CD4-positive, alpha-beta memory T cell (primary cell): ENCODE measurements at regions of chr12 and their contacts with region 1.

Region 1: GRCh38 chr12:8890313-8891085 is 23.8 kb upstream of the PHC1 start:
- DNase-seq: peak; percentile 52 to 68 (median 62)
- H3K4me3 ChIP-seq: peak overlapping the region; percentile 44 to 49
- H3K4me3 Mint-ChIP-seq: peak overlapping the region; percentile 88 to 96 (median 94)
- H3K27ac ChIP-seq: peak overlapping the region; percentile 29
- H3K27ac Mint-ChIP-seq: peak overlapping the region in 6 of 7 donors; percentile 81 to 93 (median 84)
- H3K4me1 ChIP-seq: no peaks in the 10 kb centered on the region
- H3K4me1 Mint-ChIP-seq: peaks cover 0 to 6% (median 5%) of the 10 kb centered on the region in 4 donors
- H3K27me3 ChIP-seq: no peaks in the 10 kb centered on the region
- H3K27me3 Mint-ChIP-seq: no peaks in the 10 kb centered on the region

Region 2: GRCh38 chr12:8662593-8662992 is 227.9 kb before region 1 on chr12 and contains the start of gene MFAP5:
- CTCF ChIA-PET with region 1: interaction called, 41 read pairs
- POLR2A ChIA-PET with region 1: interaction called, 6 read pairs
- intact Hi-C with region 1: loop called (anchors 1 kb)
- DNase-seq: no peak
- H3K4me3 ChIP-seq: no peak within 1 kb of the TSS
- H3K4me3 Mint-ChIP-seq: no peak within 1 kb of the TSS
- H3K27ac ChIP-seq: no peak within 1 kb of the TSS
- H3K27ac Mint-ChIP-seq: no peak within 1 kb of the TSS
- H3K4me1 ChIP-seq: no peaks in the 10 kb centered on the region
- H3K4me1 Mint-ChIP-seq: no peaks in the 10 kb centered on the region
- H3K27me3 ChIP-seq: no peaks in the 10 kb centered on the region
- H3K27me3 Mint-ChIP-seq: peaks cover 5% of the 10 kb centered on the region in 2 donors
- total RNA-seq, gene MFAP5: not detected

Region 3: DNA sequence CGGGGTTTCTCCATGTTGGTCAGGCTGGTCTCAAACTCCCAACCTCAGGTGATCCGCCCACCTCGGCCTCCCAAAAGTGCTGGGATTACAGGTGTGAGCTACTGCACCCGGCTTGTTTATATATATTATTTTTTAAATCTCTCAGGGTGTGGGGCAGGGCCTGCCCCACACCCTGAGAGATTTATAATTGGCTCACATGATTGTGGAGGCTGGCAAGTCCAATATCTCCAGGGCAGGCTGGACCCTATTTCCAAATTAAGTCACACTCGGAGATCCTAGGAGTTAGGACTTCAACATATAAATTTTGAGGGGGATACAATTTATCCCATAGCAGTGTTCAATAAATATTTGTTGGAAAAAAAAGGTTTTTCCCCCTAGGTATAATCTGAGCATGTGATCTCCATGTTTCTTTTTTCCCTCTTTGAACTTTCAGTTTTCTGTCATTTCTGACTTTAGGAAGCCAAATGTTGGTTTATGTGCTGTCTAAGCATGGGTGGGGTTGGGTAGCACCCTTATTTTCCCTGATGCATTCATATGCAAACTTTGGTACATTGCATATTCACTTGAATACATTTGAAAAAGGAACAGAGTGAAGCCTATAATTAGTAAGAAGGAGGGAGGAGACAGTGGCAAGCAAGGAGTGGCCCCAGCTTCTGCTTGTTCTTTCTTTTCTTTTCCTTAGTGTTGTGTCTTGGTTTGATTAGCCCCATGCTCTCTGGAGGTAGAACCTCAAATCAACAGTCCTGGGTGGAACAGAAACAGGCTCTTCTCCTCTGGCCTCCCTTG is 76.7 kb before region 1 on chr12:
- CTCF ChIA-PET with region 1: no interaction called
- POLR2A ChIA-PET with region 1: no interaction called
- intact Hi-C with region 1: no loop called
- DNase-seq: no peak
- H3K4me3 ChIP-seq: no peak overlapping the region
- H3K4me3 Mint-ChIP-seq: no peak overlapping the region
- H3K27ac ChIP-seq: no peak overlapping the region
- H3K27ac Mint-ChIP-seq: peak overlapping the region in 1 of 7 donors; percentile 67
- H3K4me1 ChIP-seq: no peaks in the 10 kb centered on the region
- H3K4me1 Mint-ChIP-seq: peaks cover 0 to 2% (median 0%) of the 10 kb centered on the region in 4 donors
- H3K27me3 ChIP-seq: no peaks in the 10 kb centered on the region
- H3K27me3 Mint-ChIP-seq: no peaks in the 10 kb centered on the region

Region 4: GRCh38 chr12:8860165-8860961 is 30.1 kb before region 1 on chr12:
- CTCF ChIA-PET with region 1: interaction called, 13 read pairs
- POLR2A ChIA-PET with region 1: no interaction called
- intact Hi-C with region 1: no loop called
- DNase-seq: peak in 4 of 5 donors; percentile 18 to 28 (median 25)
- H3K4me3 ChIP-seq: no peak overlapping the region
- H3K4me3 Mint-ChIP-seq: no peak overlapping the region
- H3K27ac ChIP-seq: no peak overlapping the region
- H3K27ac Mint-ChIP-seq: no peak overlapping the region
- H3K4me1 ChIP-seq: no peaks in the 10 kb centered on the region
- H3K4me1 Mint-ChIP-seq: no peaks in the 10 kb centered on the region
- H3K27me3 ChIP-seq: no peaks in the 10 kb centered on the region
- H3K27me3 Mint-ChIP-seq: peaks cover 0 to 4% of the 10 kb centered on the region in 2 donors

Region 5: DNA sequence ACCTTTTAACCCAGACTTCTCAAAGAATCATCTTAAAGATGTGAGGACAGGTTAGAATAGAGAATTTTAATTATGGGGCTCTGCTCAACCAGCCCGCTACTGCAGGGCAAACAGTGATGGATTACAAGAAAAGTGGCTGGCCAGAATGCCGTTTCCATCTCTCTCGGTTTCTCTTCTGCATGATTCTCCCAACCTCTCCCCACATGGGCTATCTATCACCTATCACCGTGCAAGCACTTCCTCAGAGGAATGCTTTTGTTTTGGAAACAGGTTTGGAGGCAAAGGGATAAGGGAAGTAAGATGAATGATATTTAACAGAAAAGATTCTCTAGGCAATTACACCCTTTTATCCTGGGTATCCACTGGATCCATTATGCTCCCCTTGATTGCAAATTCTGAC is 13.6 kb before region 1 on chr12:
- CTCF ChIA-PET with region 1: interaction called, 22 read pairs
- POLR2A ChIA-PET with region 1: interaction called, 3 read pairs
- intact Hi-C with region 1: no loop called
- DNase-seq: no peak
- H3K4me3 ChIP-seq: no peak overlapping the region
- H3K4me3 Mint-ChIP-seq: no peak overlapping the region
- H3K27ac ChIP-seq: no peak overlapping the region
- H3K27ac Mint-ChIP-seq: no peak overlapping the region
- H3K4me1 ChIP-seq: no peaks in the 10 kb centered on the region
- H3K4me1 Mint-ChIP-seq: peaks cover 0 to 6% (median 2%) of the 10 kb centered on the region in 4 donors
- H3K27me3 ChIP-seq: no peaks in the 10 kb centered on the region
- H3K27me3 Mint-ChIP-seq: peaks cover 0 to 3% of the 10 kb centered on the region in 2 donors

Region 6: DNA sequence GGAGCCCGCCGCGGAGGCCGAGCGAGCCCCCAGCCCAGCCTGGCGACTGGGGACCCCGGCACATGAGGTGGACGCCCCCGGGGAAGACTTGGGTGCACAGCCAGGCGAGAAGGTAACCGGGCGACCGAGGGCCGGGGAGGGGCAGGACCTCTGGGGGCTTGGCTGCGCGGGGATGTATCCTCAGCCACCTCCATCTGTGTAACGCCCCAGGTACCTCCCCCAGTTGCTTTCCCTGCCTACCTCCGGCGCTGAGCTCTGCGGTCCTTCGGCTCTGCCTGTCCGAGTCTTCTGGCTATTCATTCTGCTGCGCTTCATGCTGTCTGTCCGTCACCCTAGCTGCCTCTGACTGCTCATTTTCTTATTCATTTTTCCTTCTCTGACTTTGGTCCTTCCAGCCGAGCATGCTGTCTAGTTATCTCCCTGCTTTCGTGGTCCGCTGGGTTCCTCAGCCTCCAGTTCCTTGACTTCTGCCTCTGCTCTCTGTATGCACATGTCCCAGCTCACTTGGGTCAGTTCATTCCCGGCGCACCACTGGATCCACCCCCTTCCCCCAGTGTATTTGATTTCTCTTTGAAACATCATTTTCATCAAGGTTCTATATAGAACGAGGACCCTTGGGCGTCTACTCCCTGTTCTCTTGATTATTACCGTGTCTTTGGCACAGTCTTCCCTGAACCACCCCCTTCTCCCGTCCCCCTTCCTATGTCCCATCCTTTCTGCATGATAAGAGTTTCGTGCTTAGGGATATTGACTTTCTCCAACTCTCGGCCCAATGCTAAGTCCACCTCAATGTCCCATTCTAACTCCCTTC is 24.4 kb after region 1 on chr12:
- CTCF ChIA-PET with region 1: interaction called, 38 read pairs
- POLR2A ChIA-PET with region 1: interaction called, 3 read pairs
- intact Hi-C with region 1: no loop called
- DNase-seq: peak; percentile 65 to 80 (median 70)
- H3K4me3 ChIP-seq: peak overlapping the region; percentile 81 to 92
- H3K4me3 Mint-ChIP-seq: no peak overlapping the region
- H3K27ac ChIP-seq: peak overlapping the region; percentile 63
- H3K27ac Mint-ChIP-seq: no peak overlapping the region
- H3K4me1 ChIP-seq: peaks cover 36% of the 10 kb centered on the region
- H3K4me1 Mint-ChIP-seq: peaks cover 10 to 17% (median 14%) of the 10 kb centered on the region in 4 donors
- H3K27me3 ChIP-seq: no peaks in the 10 kb centered on the region
- H3K27me3 Mint-ChIP-seq: no peaks in the 10 kb centered on the region

Region 7: DNA sequence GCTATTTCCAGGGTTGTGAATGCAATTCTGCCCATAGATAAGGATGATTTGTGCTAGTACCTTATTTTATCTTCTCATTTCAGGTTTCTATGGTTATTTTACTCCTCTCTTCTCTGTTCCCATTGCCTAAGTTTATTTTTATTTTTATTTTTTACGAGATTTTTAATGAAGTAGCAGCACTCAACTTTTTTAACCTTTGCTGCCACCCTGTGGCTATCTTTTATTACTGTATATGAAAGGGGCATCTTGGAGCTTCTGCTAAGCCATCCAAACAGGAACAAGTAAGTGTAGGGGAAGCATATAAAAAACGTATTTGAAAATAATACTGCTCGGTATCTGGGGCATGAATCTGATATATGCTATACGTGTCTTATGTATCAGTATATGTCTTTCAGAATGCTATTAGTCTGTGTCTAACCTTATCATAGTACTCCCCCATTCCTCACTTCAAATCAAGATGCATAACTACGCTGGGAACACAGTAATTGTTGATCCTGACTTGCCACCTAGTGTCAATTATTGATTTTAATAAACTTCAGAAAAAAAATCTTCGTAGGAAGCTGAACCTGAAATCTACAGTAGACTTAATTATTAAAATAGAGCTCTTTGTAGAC is 159.1 kb after region 1 on chr12:
- CTCF ChIA-PET with region 1: interaction called, 64 read pairs
- POLR2A ChIA-PET with region 1: interaction called, 3 read pairs
- intact Hi-C with region 1: loop called (anchors 1 kb)
- DNase-seq: peak; percentile 39 to 66 (median 60)
- H3K4me3 ChIP-seq: no peak overlapping the region
- H3K4me3 Mint-ChIP-seq: peak overlapping the region in 2 of 8 donors; percentile 26 to 55
- H3K27ac ChIP-seq: no peak overlapping the region
- H3K27ac Mint-ChIP-seq: peak overlapping the region; percentile 26 to 90 (median 51)
- H3K4me1 ChIP-seq: peaks cover 25% of the 10 kb centered on the region
- H3K4me1 Mint-ChIP-seq: peaks cover 20 to 46% (median 35%) of the 10 kb centered on the region in 4 donors
- H3K27me3 ChIP-seq: no peaks in the 10 kb centered on the region
- H3K27me3 Mint-ChIP-seq: no peaks in the 10 kb centered on the region

Region 8: GRCh38 chr12:9118158-9118557 is 227.7 kb after region 1 on chr12:
- CTCF ChIA-PET with region 1: no interaction called
- POLR2A ChIA-PET with region 1: no interaction called
- intact Hi-C with region 1: no loop called
- DNase-seq: no peak
- H3K4me3 ChIP-seq: no peak overlapping the region
- H3K4me3 Mint-ChIP-seq: no peak overlapping the region
- H3K27ac ChIP-seq: no peak overlapping the region
- H3K27ac Mint-ChIP-seq: no peak overlapping the region
- H3K4me1 ChIP-seq: peaks cover 9% of the 10 kb centered on the region
- H3K4me1 Mint-ChIP-seq: peaks cover 22 to 33% (median 27%) of the 10 kb centered on the region in 4 donors
- H3K27me3 ChIP-seq: no peaks in the 10 kb centered on the region
- H3K27me3 Mint-ChIP-seq: no peaks in the 10 kb centered on the region